ENCODE measurements at regions of chr2 and their contacts with region 1.

Region 1: GRCh38 chr2:28594289-28595108 is 98.6 kb downstream of the PLB1 start:
- DNase-seq: peak; percentile 86
- H3K4me3 Mint-ChIP-seq: peak overlapping the region; percentile 16
- H3K27ac Mint-ChIP-seq: peak overlapping the region; percentile 41
- H3K4me1 Mint-ChIP-seq: peaks cover 18% of the 10 kb centered on the region
- H3K27me3 Mint-ChIP-seq: no peaks in the 10 kb centered on the region

Region 2: GRCh38 chr2:28566521-28567041 is 27.9 kb before region 1 on chr2:
- CTCF ChIA-PET with region 1: interaction called, 56 read pairs
- POLR2A ChIA-PET with region 1: interaction called, 5 read pairs
- DNase-seq: peak; percentile 91
- H3K4me3 Mint-ChIP-seq: peak overlapping the region; percentile 81
- H3K27ac Mint-ChIP-seq: peak overlapping the region; percentile 45
- H3K4me1 Mint-ChIP-seq: peaks cover 19% of the 10 kb centered on the region
- H3K27me3 Mint-ChIP-seq: peaks cover 11% of the 10 kb centered on the region

Region 3: DNA sequence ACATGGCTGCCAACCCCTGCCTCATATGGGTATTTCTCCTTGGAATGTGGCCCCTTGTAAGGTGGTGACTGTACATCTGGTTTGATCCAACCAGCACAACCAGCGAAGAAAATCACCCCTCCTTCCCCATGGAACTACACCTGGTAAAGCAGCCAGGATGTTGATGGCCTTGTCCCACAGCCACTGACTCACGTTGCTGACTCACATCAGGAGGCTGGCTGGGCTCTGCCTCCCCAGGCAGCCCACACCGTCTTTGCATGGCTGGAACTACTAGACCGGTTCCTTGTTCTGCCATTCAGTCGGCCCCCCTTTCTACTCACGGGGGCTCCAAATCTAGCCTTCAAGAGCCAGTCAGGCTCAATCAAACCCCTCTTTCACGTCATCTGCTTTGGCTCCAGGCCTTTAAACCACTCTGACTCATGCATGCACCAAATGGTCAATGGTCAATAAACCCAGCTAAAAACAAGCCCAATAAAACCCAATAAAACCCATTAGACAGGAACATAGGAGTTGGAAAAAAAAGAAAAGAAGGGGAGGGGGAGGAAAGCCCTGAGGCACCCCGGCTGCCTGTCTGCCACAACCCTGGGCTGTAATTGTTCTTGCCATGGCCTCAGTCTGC is 16.2 kb after region 1 on chr2:
- CTCF ChIA-PET with region 1: interaction called, 72 read pairs
- POLR2A ChIA-PET with region 1: interaction called, 27 read pairs
- DNase-seq: peak; percentile 68
- H3K4me3 Mint-ChIP-seq: peak overlapping the region; percentile 28
- H3K27ac Mint-ChIP-seq: peak overlapping the region; percentile 50
- H3K4me1 Mint-ChIP-seq: peaks cover 32% of the 10 kb centered on the region
- H3K27me3 Mint-ChIP-seq: no peaks in the 10 kb centered on the region

Region 4: DNA sequence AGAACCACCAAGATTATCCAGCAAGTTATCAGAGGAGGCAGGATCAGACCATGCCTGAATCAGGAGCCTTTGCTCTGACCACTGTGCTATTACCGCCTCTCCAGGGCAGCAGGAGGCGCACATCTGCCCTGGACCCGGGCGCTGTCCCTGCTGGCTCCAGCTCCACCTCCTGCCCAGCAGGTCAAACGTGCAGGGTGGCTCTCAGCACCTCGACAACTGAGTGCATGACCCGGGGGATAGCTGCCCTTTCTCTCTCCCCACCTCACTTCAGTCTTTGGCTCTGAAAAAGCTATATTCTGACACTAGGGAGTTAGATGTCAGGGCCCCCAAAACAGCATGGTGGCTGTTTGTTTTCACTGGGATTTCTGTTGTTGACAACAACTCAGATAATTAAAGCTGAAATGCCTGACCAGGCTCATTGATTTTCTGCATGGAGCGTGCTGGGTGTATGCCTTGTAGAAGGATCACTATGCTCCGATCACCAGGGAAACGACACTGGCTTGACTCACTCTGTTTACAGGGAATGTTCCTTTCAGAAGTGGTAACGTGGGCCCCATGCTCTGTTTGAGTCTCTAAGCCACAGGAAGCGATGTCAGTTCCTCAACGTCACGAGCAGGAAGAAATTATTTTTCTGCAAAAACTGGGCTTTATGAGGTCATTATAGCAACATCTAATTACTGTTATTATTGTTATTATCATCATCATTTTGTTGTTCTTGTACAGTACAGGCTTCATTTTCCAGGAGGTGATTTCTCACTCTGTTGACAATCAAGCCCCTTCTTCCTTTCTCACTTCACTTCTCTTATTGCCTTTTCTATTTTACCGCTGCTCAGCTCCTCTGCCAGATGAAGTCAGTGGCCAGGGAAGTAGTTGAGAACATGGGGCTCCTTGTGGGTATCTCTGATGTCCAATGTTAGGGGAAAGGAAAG is 26.9 kb after region 1 on chr2:
- CTCF ChIA-PET with region 1: interaction called, 27 read pairs
- POLR2A ChIA-PET with region 1: interaction called, 10 read pairs
- DNase-seq: peak; percentile 79
- H3K4me3 Mint-ChIP-seq: peak overlapping the region; percentile 53
- H3K27ac Mint-ChIP-seq: peak overlapping the region; percentile 96
- H3K4me1 Mint-ChIP-seq: peaks cover 86% of the 10 kb centered on the region
- H3K27me3 Mint-ChIP-seq: no peaks in the 10 kb centered on the region

Region 5: DNA sequence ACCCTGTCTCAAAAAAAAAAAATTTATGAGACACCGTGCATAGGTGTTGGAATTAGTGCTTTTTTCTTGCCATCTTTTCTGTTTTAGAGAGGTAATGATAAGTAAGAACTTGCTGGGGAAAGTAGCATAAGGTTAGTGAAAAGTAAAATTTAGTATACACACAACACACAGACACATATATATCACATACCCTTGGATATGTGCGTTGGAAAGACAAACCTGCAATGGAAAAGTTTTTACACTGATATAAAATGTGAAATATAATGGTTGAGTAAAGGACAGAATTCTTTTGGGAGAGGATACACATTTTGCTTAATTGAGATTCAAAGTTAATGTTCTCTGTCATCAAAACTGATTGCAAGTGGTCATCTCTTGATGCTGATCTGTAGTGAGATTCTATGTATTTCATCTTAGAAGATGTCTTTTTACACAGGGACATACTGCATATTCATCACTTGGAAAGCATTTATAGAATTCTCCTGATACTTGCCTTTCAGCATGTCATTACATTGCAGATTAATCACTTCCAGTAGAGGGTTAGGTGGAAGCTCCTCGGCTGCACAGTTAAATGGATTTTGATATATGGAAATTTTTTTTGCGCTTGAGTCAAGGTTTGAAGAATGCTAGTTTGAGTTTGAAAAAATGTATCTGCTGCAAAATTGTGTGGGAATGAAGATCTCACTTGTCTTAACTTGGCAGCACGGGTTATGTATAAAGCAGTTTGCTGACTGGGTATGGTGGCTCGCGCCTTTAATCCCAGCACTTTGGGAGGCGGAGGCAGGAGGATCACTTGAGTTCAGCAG is 170.6 kb after region 1 on chr2:
- CTCF ChIA-PET with region 1: interaction called, 21 read pairs
- POLR2A ChIA-PET with region 1: no interaction called
- DNase-seq: no peak
- H3K4me3 Mint-ChIP-seq: no peak overlapping the region
- H3K27ac Mint-ChIP-seq: no peak overlapping the region
- H3K4me1 Mint-ChIP-seq: peaks cover 28% of the 10 kb centered on the region
- H3K27me3 Mint-ChIP-seq: no peaks in the 10 kb centered on the region

Region 6: GRCh38 chr2:28801726-28802487 is 207.4 kb after region 1 on chr2:
- CTCF ChIA-PET with region 1: interaction called, 11 read pairs
- POLR2A ChIA-PET with region 1: no interaction called
- DNase-seq: no peak
- H3K4me3 Mint-ChIP-seq: no peak overlapping the region
- H3K27ac Mint-ChIP-seq: no peak overlapping the region
- H3K4me1 Mint-ChIP-seq: peaks cover 7% of the 10 kb centered on the region
- H3K27me3 Mint-ChIP-seq: no peaks in the 10 kb centered on the region

Measured in activated CD4-positive, alpha-beta memory T cell treated with anti-CD3 and anti-CD28 coated beads, Interleukin-2, amount 10 ng/mL, durations not matched to agents 7 days and 5 days (primary cell).